HEK293 (cell line): ENCODE measurements at regions of chr12 and their contacts with region 1.

Region 1: GRCh38 chr12:8544295-8544694 is 3.6 kb upstream of the CLEC4E start:
- H3K4me3 ChIP-seq: no peak overlapping the region
- H3K27ac ChIP-seq: no peak overlapping the region
- H3K4me1 ChIP-seq: no peaks in the 10 kb centered on the region
- CTCF ChIP-seq: peak; percentile 31; the same call in 1 of the 2 replicates

Region 2: DNA sequence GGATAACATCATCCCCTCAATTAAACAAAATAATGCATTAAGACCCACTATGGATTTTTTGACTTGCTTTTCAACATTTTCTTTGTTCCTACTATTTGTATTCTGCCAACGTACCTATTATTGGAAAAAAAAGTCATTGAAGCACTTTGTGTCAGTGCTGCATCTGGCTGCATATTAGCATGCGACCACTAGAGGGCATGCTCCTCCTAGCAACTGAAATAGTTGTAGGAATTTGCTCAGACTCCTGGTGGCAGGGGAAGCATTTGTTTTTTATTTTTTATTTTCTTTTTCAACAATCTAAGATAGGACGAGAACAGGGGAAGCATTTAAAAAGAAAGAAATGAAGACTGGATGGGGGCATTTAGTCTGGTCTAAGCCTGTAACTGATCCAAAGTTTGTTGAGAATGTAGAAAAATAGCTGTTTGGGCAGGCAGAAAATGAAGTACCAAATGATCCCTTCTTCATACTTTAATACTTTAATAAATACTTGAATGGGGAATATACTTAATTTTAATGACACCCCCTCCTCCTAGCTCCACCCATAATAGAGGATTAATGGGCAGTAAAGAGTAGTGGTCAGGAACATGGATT is 435.4 kb before region 1 on chr12:
- CTCF ChIA-PET with region 1: no interaction called
- POLR2A ChIA-PET with region 1: no interaction called
- H3K4me3 ChIP-seq: no peak overlapping the region
- H3K27ac ChIP-seq: no peak overlapping the region
- H3K4me1 ChIP-seq: no peaks in the 10 kb centered on the region
- CTCF ChIP-seq: peak; percentile 78

Region 3: GRCh38 chr12:8532045-8532444 is 12.2 kb before region 1 on chr12:
- CTCF ChIA-PET with region 1: interaction called, 30 read pairs
- POLR2A ChIA-PET with region 1: no interaction called
- H3K4me3 ChIP-seq: no peak overlapping the region
- H3K27ac ChIP-seq: no peak overlapping the region
- H3K4me1 ChIP-seq: no peaks in the 10 kb centered on the region
- CTCF ChIP-seq: no peak

Region 4: DNA sequence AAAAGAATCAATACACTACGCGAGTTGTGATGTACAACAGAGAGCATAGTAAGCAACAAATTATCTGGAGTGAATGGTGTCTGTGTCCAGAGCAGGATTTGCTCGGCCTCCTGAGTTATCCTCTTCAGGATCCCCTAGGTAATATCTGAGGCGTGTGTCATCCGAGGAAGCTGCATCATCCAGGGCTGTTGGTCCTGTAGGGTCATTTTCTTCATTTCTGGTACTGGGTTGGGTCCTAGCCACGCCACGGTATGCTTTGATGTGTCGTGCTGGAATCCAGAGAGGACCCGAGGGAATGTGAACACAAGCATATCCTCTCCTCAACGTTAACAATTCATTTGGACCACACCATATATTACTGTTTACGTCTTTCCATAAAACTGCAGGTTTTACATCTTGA is 15.4 kb after region 1 on chr12:
- CTCF ChIA-PET with region 1: interaction called, 24 read pairs
- POLR2A ChIA-PET with region 1: no interaction called
- H3K4me3 ChIP-seq: no peak overlapping the region
- H3K27ac ChIP-seq: no peak overlapping the region
- H3K4me1 ChIP-seq: no peaks in the 10 kb centered on the region
- CTCF ChIP-seq: no peak

Region 5: DNA sequence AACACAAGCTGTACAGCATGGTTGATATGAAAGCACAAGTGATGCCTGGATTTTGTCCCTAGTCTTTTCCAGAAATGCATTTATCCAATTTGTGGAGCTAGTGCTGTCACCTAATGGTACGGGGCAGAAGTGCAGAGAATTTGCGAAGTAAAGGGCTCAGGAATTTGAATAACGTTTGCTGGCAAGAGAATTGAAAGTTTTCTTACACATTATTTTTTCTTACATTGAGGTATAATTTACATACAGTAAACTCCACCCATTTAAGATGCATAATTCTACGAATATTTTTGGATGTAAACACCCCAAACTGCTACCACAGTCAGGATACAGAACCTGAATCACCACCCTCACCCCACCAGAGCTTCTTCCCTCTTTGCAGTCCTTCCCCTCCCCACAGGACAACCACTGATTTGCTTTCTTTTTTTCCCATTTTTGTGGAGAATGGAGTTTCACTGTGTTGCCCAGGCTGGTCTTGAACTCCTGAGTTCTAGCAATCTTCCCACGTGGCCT is 64.8 kb after region 1 on chr12:
- CTCF ChIA-PET with region 1: interaction called, 128 read pairs
- POLR2A ChIA-PET with region 1: no interaction called
- H3K4me3 ChIP-seq: no peak overlapping the region
- H3K27ac ChIP-seq: no peak overlapping the region
- H3K4me1 ChIP-seq: no peaks in the 10 kb centered on the region
- CTCF ChIP-seq: peak; percentile 25; the same call in 1 of the 2 replicates

Region 6: GRCh38 chr12:8844665-8845064 is 300.4 kb after region 1 on chr12:
- CTCF ChIA-PET with region 1: no interaction called
- POLR2A ChIA-PET with region 1: no interaction called
- H3K4me3 ChIP-seq: no peak overlapping the region
- H3K27ac ChIP-seq: no peak overlapping the region
- H3K4me1 ChIP-seq: no peaks in the 10 kb centered on the region
- CTCF ChIP-seq: no peak

Region 7: GRCh38 chr12:8860165-8860961 is 316.1 kb after region 1 on chr12:
- CTCF ChIA-PET with region 1: interaction called, 14 read pairs
- POLR2A ChIA-PET with region 1: no interaction called
- H3K4me3 ChIP-seq: no peak overlapping the region
- H3K27ac ChIP-seq: no peak overlapping the region
- H3K4me1 ChIP-seq: peaks cover 3% of the 10 kb centered on the region; the same call in 1 of the 2 replicates
- CTCF ChIP-seq: peak; percentile 51; the same call in 1 of the 2 replicates

Region 8: DNA sequence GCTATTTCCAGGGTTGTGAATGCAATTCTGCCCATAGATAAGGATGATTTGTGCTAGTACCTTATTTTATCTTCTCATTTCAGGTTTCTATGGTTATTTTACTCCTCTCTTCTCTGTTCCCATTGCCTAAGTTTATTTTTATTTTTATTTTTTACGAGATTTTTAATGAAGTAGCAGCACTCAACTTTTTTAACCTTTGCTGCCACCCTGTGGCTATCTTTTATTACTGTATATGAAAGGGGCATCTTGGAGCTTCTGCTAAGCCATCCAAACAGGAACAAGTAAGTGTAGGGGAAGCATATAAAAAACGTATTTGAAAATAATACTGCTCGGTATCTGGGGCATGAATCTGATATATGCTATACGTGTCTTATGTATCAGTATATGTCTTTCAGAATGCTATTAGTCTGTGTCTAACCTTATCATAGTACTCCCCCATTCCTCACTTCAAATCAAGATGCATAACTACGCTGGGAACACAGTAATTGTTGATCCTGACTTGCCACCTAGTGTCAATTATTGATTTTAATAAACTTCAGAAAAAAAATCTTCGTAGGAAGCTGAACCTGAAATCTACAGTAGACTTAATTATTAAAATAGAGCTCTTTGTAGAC is 505.3 kb after region 1 on chr12:
- CTCF ChIA-PET with region 1: interaction called, 38 read pairs
- POLR2A ChIA-PET with region 1: no interaction called
- H3K4me3 ChIP-seq: no peak overlapping the region
- H3K27ac ChIP-seq: no peak overlapping the region
- H3K4me1 ChIP-seq: no peaks in the 10 kb centered on the region
- CTCF ChIP-seq: no peak